CD4-positive, alpha-beta T cell (primary cell): ENCODE measurements at regions of chr3 and their contacts with region 1.

Region 1: DNA sequence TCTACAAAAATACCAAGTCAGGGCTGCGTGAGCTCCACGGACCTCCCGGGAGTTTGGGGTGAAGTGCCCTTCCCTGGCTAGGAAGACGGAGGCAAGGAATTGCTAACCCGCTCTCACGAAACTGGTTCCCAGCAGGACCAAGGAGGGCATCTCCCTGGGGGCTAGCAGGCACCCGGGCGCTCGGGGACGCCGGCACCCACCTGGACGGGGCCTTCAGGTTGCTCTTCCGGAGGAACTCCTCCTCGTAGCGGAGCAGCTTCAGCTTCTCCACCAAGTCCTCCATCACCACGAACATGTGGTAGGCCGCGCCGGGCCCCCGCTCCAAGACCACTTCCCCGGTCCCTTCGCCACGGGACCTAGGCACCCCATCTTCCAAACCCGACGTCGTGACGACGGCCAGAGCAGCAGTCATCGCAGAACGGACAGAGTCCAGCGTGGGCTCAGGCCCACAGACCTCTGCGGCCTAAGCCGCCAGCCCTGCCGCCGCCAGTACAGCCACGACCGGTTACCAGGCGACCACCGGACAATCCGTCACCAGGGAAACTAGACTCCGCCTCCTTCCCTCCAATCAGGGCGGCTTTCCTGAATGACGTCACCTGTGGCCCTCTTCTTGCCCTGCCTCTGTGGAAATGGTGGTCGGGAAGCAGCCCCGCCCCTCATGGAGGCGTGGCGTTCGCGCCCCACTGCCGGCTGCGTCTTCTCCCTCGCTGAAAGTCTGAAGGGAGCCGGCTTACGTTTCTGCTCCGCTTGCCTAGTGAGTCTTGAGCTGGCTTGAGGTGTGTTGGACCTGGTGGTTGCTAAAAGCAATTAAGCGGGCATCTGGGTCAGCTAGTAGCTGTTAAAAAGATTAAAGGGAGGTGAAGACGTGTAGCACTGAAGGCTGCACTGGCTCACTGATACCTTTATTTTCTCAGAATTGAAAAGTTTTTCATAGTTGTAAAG is at the start of gene IFT57:
- DNase-seq: peak; percentile 86 to 99 (median 94)
- ATAC-seq: peak; percentile 92
- H3K4me3 ChIP-seq: peak within 1 kb of the TSS; percentile 94
- H3K4me3 Mint-ChIP-seq: peak within 1 kb of the TSS; percentile 91
- H3K27ac ChIP-seq: peak within 1 kb of the TSS; percentile 77 to 96
- H3K27ac Mint-ChIP-seq: peak within 1 kb of the TSS; percentile 98
- H3K4me1 ChIP-seq: peaks cover 16% of the 10 kb centered on the region
- H3K4me1 Mint-ChIP-seq: peaks cover 62% of the 10 kb centered on the region
- H3K27me3 ChIP-seq: no peaks in the 10 kb centered on the region
- H3K27me3 Mint-ChIP-seq: no peaks in the 10 kb centered on the region
- CTCF ChIP-seq: no peak
- total RNA-seq, gene IFT57: 56.6 to 58.6 TPM

Region 2: DNA sequence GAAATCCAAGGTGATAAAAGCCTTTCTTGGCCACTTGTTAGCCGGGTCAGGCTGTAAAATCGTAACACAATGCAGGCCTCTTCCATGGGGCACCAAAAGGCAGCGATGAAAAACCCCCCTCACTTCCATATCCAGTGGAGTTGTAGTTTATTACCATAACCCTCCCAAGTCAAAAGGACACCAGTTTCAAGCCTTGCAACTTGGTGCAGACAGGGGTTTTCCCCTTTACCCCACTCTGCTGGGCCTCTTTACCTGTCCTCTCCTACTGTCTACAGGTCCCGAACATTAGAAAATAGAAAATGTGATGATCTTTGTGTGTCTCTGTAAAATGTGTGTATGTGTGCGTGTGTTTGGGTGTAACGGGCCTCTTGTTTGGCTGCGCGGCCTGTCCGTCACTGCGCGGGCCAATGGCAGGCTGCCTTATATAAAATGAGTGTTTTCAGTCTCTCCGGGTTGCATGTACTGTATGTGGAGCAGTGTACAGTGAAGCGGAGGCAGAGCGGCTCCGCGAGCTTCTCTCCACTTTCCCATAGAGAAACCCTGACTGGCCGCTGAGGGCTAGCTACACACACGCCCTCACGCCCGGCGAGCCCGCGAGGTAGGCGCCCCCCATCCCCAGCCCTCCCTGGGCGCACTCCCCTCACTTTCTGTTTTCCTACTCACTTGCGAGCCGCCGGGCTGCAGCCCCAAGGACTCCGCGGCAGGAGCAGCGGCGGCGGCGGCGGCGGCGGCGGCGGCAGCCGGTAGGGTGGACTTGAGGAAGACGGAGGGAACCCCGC is 699.5 kb before region 1 on chr3 and contains the start of gene BBX:
- CTCF ChIA-PET with region 1: no interaction called
- POLR2A ChIA-PET with region 1: interaction called, 6 read pairs
- intact Hi-C with region 1: loop called (anchors 2 to 10 kb)
- DNase-seq: peak; percentile 85 to 97 (median 92)
- ATAC-seq: peak; percentile 89
- H3K4me3 ChIP-seq: peak within 1 kb of the TSS; percentile 67
- H3K4me3 Mint-ChIP-seq: peak within 1 kb of the TSS; percentile 99
- H3K27ac ChIP-seq: peak within 1 kb of the TSS; percentile 77 to 85
- H3K27ac Mint-ChIP-seq: peak within 1 kb of the TSS; percentile 95
- H3K4me1 ChIP-seq: peaks cover 19% of the 10 kb centered on the region
- H3K4me1 Mint-ChIP-seq: peaks cover 26% of the 10 kb centered on the region
- H3K27me3 ChIP-seq: no peaks in the 10 kb centered on the region
- H3K27me3 Mint-ChIP-seq: no peaks in the 10 kb centered on the region
- CTCF ChIP-seq: no peak
- total RNA-seq, gene BBX: 79.7 to 81.8 TPM

Region 3: DNA sequence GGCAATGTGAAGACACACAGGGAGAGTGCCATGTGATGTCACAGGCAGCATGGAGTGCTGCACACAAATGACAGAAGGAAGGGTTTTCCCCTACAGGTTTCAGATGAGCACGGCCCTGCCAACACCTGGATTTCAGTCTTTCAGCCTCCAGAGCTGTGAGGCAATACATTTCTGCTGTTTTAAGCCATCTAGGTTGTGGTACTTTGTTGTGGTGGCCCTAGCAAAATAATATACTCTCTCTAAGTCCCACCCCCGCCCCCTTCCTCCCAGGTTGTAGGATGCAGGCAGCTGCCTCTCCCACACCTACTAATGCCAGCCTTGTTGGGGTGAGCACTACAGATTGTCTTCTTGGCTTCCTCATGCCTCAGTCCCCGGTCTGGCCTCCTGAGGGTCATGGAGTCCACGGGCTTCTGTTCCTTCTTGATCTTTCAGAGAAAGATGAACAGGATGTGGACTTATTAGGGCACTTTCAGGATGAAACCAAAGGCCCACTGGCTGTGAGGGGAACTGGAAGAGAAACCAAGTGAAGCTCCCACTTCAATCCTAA is 311.4 kb before region 1 on chr3:
- CTCF ChIA-PET with region 1: no interaction called
- POLR2A ChIA-PET with region 1: no interaction called
- intact Hi-C with region 1: no loop called
- DNase-seq: peak in 2 of 14 experiments; percentile 17 to 30
- ATAC-seq: peak; percentile 77
- H3K4me3 ChIP-seq: no peak overlapping the region
- H3K4me3 Mint-ChIP-seq: no peak overlapping the region
- H3K27ac ChIP-seq: no peak overlapping the region
- H3K27ac Mint-ChIP-seq: no peak overlapping the region
- H3K4me1 ChIP-seq: peaks cover 4% of the 10 kb centered on the region
- H3K4me1 Mint-ChIP-seq: peaks cover 8% of the 10 kb centered on the region
- H3K27me3 ChIP-seq: no peaks in the 10 kb centered on the region
- H3K27me3 Mint-ChIP-seq: peaks cover 1% of the 10 kb centered on the region
- CTCF ChIP-seq: no peak

Region 4: GRCh38 chr3:107938143-107938542 is 284.0 kb before region 1 on chr3:
- CTCF ChIA-PET with region 1: no interaction called
- POLR2A ChIA-PET with region 1: no interaction called
- intact Hi-C with region 1: loop called in 1 of 2 experiments (anchors 10 kb)
- DNase-seq: peak in 4 of 14 experiments; percentile 30 to 45 (median 35)
- ATAC-seq: no peak
- H3K4me3 ChIP-seq: no peak overlapping the region
- H3K4me3 Mint-ChIP-seq: no peak overlapping the region
- H3K27ac ChIP-seq: no peak overlapping the region
- H3K27ac Mint-ChIP-seq: no peak overlapping the region
- H3K4me1 ChIP-seq: peaks cover 3% of the 10 kb centered on the region
- H3K4me1 Mint-ChIP-seq: peaks cover 10% of the 10 kb centered on the region
- H3K27me3 ChIP-seq: no peaks in the 10 kb centered on the region
- H3K27me3 Mint-ChIP-seq: no peaks in the 10 kb centered on the region
- CTCF ChIP-seq: peak; percentile 51

Region 5: GRCh38 chr3:108079877-108080659 is 142.1 kb before region 1 on chr3:
- CTCF ChIA-PET with region 1: no interaction called
- POLR2A ChIA-PET with region 1: interaction called, 17 read pairs
- intact Hi-C with region 1: no loop called
- DNase-seq: peak in 1 of 14 experiments; percentile 22
- ATAC-seq: peak; percentile 61
- H3K4me3 ChIP-seq: no peak overlapping the region
- H3K4me3 Mint-ChIP-seq: peak overlapping the region; percentile 34
- H3K27ac ChIP-seq: no peak overlapping the region
- H3K27ac Mint-ChIP-seq: peak overlapping the region; percentile 69
- H3K4me1 ChIP-seq: peaks cover 18% of the 10 kb centered on the region
- H3K4me1 Mint-ChIP-seq: peaks cover 70% of the 10 kb centered on the region
- H3K27me3 ChIP-seq: no peaks in the 10 kb centered on the region
- H3K27me3 Mint-ChIP-seq: no peaks in the 10 kb centered on the region
- CTCF ChIP-seq: no peak

Region 6: DNA sequence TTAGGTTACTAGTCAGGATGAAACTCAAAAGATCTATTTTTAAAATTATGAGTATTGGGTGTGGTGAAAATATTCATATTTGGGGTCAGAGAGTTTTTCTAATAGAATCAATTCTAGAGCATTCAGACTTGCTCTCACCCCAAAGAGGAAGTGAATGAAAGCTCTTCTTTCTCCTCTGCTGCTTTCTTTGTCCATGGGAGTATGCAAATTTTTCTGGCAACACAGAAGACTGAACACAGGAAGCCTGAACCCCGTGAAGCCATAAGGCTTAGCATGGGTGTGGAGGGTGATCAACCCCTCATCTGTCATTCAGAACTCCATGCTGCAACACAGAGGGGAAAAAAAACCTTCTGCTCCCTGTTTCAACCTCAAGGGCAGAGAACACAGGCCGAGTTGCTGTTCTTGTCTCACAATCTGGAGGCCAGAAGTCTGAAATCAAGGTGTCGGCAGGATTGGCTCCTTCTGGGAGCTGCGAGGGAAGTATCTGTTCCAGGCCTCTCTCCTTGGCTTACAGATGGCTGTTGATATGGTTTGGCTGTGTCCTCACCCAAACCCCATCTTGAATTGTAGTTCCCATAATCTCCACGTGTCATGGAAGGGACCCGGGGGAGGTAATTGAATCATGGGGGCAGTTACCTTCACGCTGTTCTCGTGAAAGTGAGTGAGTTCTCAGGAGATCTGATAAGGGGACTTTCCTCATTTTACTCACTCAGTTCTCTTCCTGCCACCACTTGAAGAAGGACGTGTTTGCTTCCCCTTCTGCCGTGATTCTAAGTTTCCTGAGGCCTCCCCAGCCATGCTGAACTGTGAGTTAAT is 97.6 kb before region 1 on chr3:
- CTCF ChIA-PET with region 1: no interaction called
- POLR2A ChIA-PET with region 1: interaction called, 137 read pairs
- intact Hi-C with region 1: loop called (anchors 1 to 2 kb)
- DNase-seq: peak in 13 of 14 experiments; percentile 17 to 92 (median 45)
- ATAC-seq: peak; percentile 56
- H3K4me3 ChIP-seq: peak overlapping the region; percentile 55
- H3K4me3 Mint-ChIP-seq: peak overlapping the region; percentile 87
- H3K27ac ChIP-seq: peak overlapping the region; percentile 93
- H3K27ac Mint-ChIP-seq: peak overlapping the region; percentile 95
- H3K4me1 ChIP-seq: peaks cover 67% of the 10 kb centered on the region
- H3K4me1 Mint-ChIP-seq: peaks cover 73% of the 10 kb centered on the region
- H3K27me3 ChIP-seq: no peaks in the 10 kb centered on the region
- H3K27me3 Mint-ChIP-seq: no peaks in the 10 kb centered on the region
- CTCF ChIP-seq: no peak

Region 7: GRCh38 chr3:108234387-108234957 is 12.3 kb after region 1 on chr3:
- CTCF ChIA-PET with region 1: no interaction called
- POLR2A ChIA-PET with region 1: interaction called, 10 read pairs
- intact Hi-C with region 1: no loop called
- DNase-seq: no peak
- ATAC-seq: no peak
- H3K4me3 ChIP-seq: no peak overlapping the region
- H3K4me3 Mint-ChIP-seq: no peak overlapping the region
- H3K27ac ChIP-seq: no peak overlapping the region
- H3K27ac Mint-ChIP-seq: no peak overlapping the region
- H3K4me1 ChIP-seq: no peaks in the 10 kb centered on the region
- H3K4me1 Mint-ChIP-seq: no peaks in the 10 kb centered on the region
- H3K27me3 ChIP-seq: no peaks in the 10 kb centered on the region
- H3K27me3 Mint-ChIP-seq: no peaks in the 10 kb centered on the region
- CTCF ChIP-seq: no peak

Region 8: DNA sequence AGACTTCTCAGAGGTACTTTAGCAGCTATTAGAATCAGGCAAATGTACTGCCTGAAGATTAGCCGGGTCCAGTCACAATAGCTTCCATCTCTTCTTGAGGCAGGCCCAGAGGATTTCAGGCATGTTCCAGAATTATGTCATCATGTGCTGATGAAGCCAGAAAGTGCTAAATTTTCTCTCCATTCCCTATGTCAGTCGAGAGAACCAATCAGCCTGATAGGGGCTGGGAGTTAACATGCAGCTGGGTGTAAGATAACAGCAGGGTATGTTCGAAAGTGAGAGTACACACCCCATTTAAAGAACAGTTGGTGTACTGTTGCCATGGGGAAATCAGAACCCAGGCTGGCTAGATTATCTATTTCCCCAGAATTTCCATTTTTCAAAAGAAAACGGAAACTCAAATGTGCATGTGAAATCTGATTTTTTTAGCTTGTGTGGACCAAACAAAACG is 239.5 kb after region 1 on chr3:
- CTCF ChIA-PET with region 1: no interaction called
- POLR2A ChIA-PET with region 1: no interaction called
- intact Hi-C with region 1: no loop called
- DNase-seq: no peak
- ATAC-seq: no peak
- H3K4me3 ChIP-seq: no peak overlapping the region
- H3K4me3 Mint-ChIP-seq: no peak overlapping the region
- H3K27ac ChIP-seq: no peak overlapping the region
- H3K27ac Mint-ChIP-seq: no peak overlapping the region
- H3K4me1 ChIP-seq: no peaks in the 10 kb centered on the region
- H3K4me1 Mint-ChIP-seq: no peaks in the 10 kb centered on the region
- H3K27me3 ChIP-seq: no peaks in the 10 kb centered on the region
- H3K27me3 Mint-ChIP-seq: peaks cover 7% of the 10 kb centered on the region
- CTCF ChIP-seq: no peak

Region 9: GRCh38 chr3:108589146-108589997 is 367.2 kb after region 1 on chr3 and contains the starts of genes CIP2A and DZIP3:
- CTCF ChIA-PET with region 1: no interaction called
- POLR2A ChIA-PET with region 1: interaction called, 8 read pairs
- intact Hi-C with region 1: loop called in 1 of 2 experiments (anchors 5 kb)
- DNase-seq: peak; percentile 64 to 96 (median 76)
- ATAC-seq: peak; percentile 80
- H3K4me3 ChIP-seq: peak within 1 kb of the TSS; percentile 79
- H3K4me3 Mint-ChIP-seq: peak within 1 kb of the TSS; percentile 96
- H3K27ac ChIP-seq: peak within 1 kb of the TSS; percentile 89 to 96
- H3K27ac Mint-ChIP-seq: peak within 1 kb of the TSS; percentile 99
- H3K4me1 ChIP-seq: peaks cover 12% of the 10 kb centered on the region
- H3K4me1 Mint-ChIP-seq: peaks cover 40% of the 10 kb centered on the region
- H3K27me3 ChIP-seq: no peaks in the 10 kb centered on the region
- H3K27me3 Mint-ChIP-seq: no peaks in the 10 kb centered on the region
- CTCF ChIP-seq: no peak
- total RNA-seq, gene CIP2A: 2.7 to 3.9 TPM
- total RNA-seq, gene DZIP3: 12.2 to 14.5 TPM